ENCODE measurements at regions of chr10 and their contacts with region 1.

Region 1: DNA sequence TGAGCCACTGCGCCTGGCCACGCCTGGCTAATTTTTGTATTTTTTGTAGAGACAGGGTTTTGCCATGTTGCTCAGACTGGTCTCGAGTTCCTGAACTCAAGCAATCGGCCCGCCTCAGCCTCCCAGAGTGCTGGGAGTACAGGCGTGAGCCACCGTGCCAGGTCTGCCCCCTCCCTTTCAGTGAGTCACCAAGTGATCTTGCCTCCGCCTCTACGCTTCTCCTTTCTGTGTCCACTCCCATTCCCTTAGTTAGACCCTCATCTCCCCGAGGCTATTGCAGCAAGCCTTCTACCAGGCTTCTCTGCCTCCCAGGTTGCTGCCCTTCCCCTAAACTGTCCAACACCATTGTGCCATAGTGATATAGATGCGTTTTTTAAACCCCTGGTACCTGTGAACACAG is 32.9 kb downstream of the CDC123 start:
- DNase-seq: no peak
- ATAC-seq: no peak
- H3K4me3 Mint-ChIP-seq: no peak overlapping the region
- H3K27ac Mint-ChIP-seq: no peak overlapping the region
- H3K4me1 Mint-ChIP-seq: no peaks in the 10 kb centered on the region
- H3K27me3 Mint-ChIP-seq: no peaks in the 10 kb centered on the region
- CTCF ChIP-seq: no peak

Region 2: GRCh38 chr10:11578802-11579255 is 650.0 kb before region 1 on chr10:
- CTCF ChIA-PET with region 1: no interaction called
- POLR2A ChIA-PET with region 1: interaction called, 12 read pairs
- intact Hi-C with region 1: no loop called
- DNase-seq: no peak
- ATAC-seq: peak; percentile 72
- H3K4me3 Mint-ChIP-seq: peak overlapping the region; percentile 46
- H3K27ac Mint-ChIP-seq: peak overlapping the region; percentile 67
- H3K4me1 Mint-ChIP-seq: peaks cover 75% of the 10 kb centered on the region
- H3K27me3 Mint-ChIP-seq: no peaks in the 10 kb centered on the region
- CTCF ChIP-seq: no peak

Measured in activated B cell treated with CpG ODN at 0.5 μM for 24 hours (primary cell).